B cell (primary cell): ENCODE measurements at regions of chr4 and their contacts with region 1.

Region 1: DNA sequence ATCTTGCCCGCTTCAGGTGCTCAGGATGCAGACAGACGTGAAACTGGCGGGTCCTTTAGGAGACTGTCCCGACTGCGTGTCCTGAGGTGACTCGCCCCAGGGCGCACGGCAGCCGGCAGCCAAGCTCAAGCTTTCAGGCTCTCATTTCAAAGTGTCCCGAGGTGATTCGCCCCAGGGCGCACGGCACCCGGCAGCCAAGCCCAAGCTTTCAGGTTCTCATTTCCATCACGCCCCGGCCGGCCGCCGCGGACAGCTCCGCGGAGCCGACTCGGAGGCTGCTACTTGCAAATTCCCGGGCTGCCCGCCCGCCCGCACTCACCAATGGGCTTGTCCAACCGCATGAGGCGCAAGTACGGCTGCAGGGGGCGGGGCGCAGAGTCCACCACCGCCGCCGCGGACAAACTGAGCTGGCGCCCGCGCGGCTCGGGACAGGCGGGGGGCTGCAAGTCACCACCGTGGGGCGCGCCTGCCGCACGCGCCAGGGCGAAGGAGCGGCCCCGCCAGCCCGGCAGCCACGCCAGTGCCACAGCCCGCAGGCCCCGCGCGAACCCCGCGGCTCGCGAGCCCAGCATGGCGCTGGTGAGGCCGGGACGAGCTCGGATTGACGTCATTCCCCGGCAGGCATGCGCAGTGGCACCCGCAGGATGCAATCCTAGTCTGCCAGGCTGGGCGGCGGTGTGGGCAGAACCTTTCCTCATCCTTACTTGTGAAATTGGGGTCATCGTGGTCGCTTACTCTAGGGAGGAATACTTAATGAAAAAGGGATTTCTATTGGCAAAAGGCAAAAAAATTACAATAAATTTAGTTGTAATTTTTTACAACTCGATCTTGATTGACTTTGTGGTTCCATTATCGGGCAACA is at the start of gene COQ2:
- DNase-seq: peak; percentile 96
- ATAC-seq: peak; percentile 85
- H3K4me3 ChIP-seq: peak within 1 kb of the TSS; percentile 60 to 98 (median 77)
- H3K4me3 Mint-ChIP-seq: peak within 1 kb of the TSS; percentile 99
- H3K27ac ChIP-seq: peak within 1 kb of the TSS; percentile 76 to 95
- H3K27ac Mint-ChIP-seq: peak within 1 kb of the TSS; percentile 99
- H3K4me1 ChIP-seq: peaks cover 18 to 19% of the 10 kb centered on the region in 2 donors
- H3K4me1 Mint-ChIP-seq: peaks cover 38% of the 10 kb centered on the region
- H3K27me3 ChIP-seq: no peaks in the 10 kb centered on the region
- H3K27me3 Mint-ChIP-seq: no peaks in the 10 kb centered on the region
- CTCF ChIP-seq: peak; percentile 34
- total RNA-seq, gene COQ2: 27.9 and 29.4 TPM in 2 replicates

Region 2: GRCh38 chr4:82462415-82462831 is 822.0 kb before region 1 on chr4:
- CTCF ChIA-PET with region 1: no interaction called
- POLR2A ChIA-PET with region 1: no interaction called
- intact Hi-C with region 1: loop called (anchors 2 kb)
- DNase-seq: peak; percentile 86
- ATAC-seq: peak; percentile 98
- H3K4me3 ChIP-seq: no peak overlapping the region
- H3K4me3 Mint-ChIP-seq: no peak overlapping the region
- H3K27ac ChIP-seq: no peak overlapping the region
- H3K27ac Mint-ChIP-seq: no peak overlapping the region
- H3K4me1 ChIP-seq: peaks cover 5 to 8% of the 10 kb centered on the region in 2 donors
- H3K4me1 Mint-ChIP-seq: peaks cover 25% of the 10 kb centered on the region
- H3K27me3 ChIP-seq: no peaks in the 10 kb centered on the region
- H3K27me3 Mint-ChIP-seq: no peaks in the 10 kb centered on the region
- CTCF ChIP-seq: peak; percentile 87

Region 3: DNA sequence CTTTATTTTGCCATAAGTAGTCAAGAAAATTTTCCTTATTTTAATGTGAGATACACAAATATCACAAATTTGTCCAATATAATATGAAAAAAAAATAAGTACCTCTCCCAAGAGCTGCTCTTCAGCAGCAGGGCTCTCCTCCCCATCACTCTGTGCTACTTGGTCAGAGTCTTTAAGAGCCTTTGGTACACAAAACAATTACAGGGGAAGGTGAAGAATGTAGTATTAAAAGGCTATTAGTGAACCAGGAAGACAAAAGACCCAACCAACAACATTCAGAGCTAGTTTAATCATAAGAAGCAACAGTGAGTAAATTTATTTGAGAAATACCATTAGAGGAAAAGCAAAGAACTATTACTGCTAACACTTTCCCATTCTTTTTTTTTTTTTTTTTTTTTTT is 422.9 kb before region 1 on chr4:
- CTCF ChIA-PET with region 1: no interaction called
- POLR2A ChIA-PET with region 1: no interaction called
- intact Hi-C with region 1: no loop called
- DNase-seq: no peak
- ATAC-seq: no peak
- H3K4me3 ChIP-seq: no peak overlapping the region
- H3K4me3 Mint-ChIP-seq: no peak overlapping the region
- H3K27ac ChIP-seq: no peak overlapping the region
- H3K27ac Mint-ChIP-seq: no peak overlapping the region
- H3K4me1 ChIP-seq: no peaks in the 10 kb centered on the region
- H3K4me1 Mint-ChIP-seq: no peaks in the 10 kb centered on the region
- H3K27me3 ChIP-seq: no peaks in the 10 kb centered on the region
- H3K27me3 Mint-ChIP-seq: no peaks in the 10 kb centered on the region
- CTCF ChIP-seq: no peak

Region 4: GRCh38 chr4:83034630-83035494 is 249.6 kb before region 1 on chr4 and contains the start of gene COPS4:
- CTCF ChIA-PET with region 1: interaction called, 9 read pairs
- POLR2A ChIA-PET with region 1: interaction called, 4 read pairs
- intact Hi-C with region 1: loop called (anchors 1 kb)
- DNase-seq: peak; percentile 99
- ATAC-seq: peak; percentile 95
- H3K4me3 ChIP-seq: peak within 1 kb of the TSS; percentile 80 to 94 (median 91)
- H3K4me3 Mint-ChIP-seq: peak within 1 kb of the TSS; percentile 98
- H3K27ac ChIP-seq: peak within 1 kb of the TSS; percentile 84 to 86
- H3K27ac Mint-ChIP-seq: peak within 1 kb of the TSS; percentile 98
- H3K4me1 ChIP-seq: peaks cover 10 to 16% of the 10 kb centered on the region in 2 donors
- H3K4me1 Mint-ChIP-seq: peaks cover 34% of the 10 kb centered on the region
- H3K27me3 ChIP-seq: no peaks in the 10 kb centered on the region
- H3K27me3 Mint-ChIP-seq: no peaks in the 10 kb centered on the region
- CTCF ChIP-seq: peak; percentile 34
- total RNA-seq, gene COPS4: 24.5 and 32.8 TPM in 2 replicates

Region 5: DNA sequence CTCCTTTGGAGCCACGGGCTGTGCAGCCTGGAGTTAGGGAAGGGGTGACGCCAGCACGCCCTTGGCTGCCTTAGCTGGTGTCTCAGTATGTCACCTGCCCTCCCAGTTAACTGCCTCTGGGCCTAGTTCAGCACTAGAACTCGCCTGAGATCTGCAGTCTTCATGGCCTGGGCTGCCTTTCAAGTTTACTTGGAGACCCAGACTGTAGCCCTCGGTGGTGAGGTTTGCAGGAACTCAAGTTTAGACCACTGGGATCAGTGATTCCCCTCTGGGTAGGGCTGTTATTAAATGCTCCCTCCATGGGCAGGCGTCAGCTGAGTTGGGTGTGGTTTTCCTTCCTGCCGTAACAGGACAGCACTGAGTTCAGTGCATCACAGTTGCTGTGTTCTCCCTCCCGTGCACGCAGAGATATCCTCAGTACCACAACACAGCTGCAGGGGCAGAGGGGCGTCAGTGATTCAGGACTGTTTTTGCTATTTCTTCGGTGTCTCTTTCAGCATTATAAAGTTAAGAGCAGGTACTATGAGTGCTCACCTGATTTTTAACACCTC is 200.4 kb before region 1 on chr4:
- CTCF ChIA-PET with region 1: interaction called, 21 read pairs
- POLR2A ChIA-PET with region 1: no interaction called
- intact Hi-C with region 1: no loop called
- DNase-seq: peak; percentile 83
- ATAC-seq: peak; percentile 98
- H3K4me3 ChIP-seq: peak overlapping the region in 2 of 5 experiments; percentile 15 to 32
- H3K4me3 Mint-ChIP-seq: peak overlapping the region; percentile 50
- H3K27ac ChIP-seq: peak overlapping the region; percentile 77 to 93
- H3K27ac Mint-ChIP-seq: peak overlapping the region; percentile 92
- H3K4me1 ChIP-seq: peaks cover 26 to 37% of the 10 kb centered on the region in 2 donors
- H3K4me1 Mint-ChIP-seq: peaks cover 44% of the 10 kb centered on the region
- H3K27me3 ChIP-seq: no peaks in the 10 kb centered on the region
- H3K27me3 Mint-ChIP-seq: no peaks in the 10 kb centered on the region
- CTCF ChIP-seq: peak; percentile 58

Region 6: GRCh38 chr4:83150653-83151330 is 133.6 kb before region 1 on chr4:
- CTCF ChIA-PET with region 1: no interaction called
- POLR2A ChIA-PET with region 1: no interaction called
- intact Hi-C with region 1: no loop called
- DNase-seq: no peak
- ATAC-seq: no peak
- H3K4me3 ChIP-seq: no peak overlapping the region
- H3K4me3 Mint-ChIP-seq: no peak overlapping the region
- H3K27ac ChIP-seq: no peak overlapping the region
- H3K27ac Mint-ChIP-seq: no peak overlapping the region
- H3K4me1 ChIP-seq: peaks cover 31 to 33% of the 10 kb centered on the region in 2 donors
- H3K4me1 Mint-ChIP-seq: peaks cover 42% of the 10 kb centered on the region
- H3K27me3 ChIP-seq: no peaks in the 10 kb centered on the region
- H3K27me3 Mint-ChIP-seq: no peaks in the 10 kb centered on the region
- CTCF ChIP-seq: no peak

Region 7: DNA sequence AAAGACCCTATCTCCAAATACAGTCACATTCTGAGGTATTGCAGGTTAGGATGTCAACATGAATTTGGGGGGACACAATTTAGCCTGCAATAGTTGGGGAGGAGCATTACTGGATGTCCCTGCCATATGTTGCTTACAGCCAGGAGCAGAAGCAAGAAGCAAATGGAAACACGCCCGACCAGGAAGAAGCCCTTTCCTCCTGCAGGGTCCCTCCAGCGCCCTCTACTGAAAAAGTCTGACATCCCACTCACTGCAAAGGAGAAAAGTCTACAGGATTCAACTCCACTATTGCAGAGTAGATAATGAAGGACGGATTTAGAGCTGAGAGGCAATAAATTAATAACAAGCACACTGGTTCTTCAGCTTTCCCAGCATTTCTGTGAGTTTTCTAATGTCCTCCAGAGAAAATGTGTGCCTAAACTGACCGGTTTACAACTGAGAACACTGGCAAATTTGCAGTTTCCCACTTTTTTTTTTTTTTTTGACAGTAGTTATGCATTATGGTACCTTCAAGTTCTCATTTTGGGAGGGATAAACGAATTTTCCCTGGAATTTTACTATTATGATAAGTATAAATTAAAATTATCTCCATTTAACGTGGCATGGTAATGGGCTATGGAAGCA is 31.5 kb before region 1 on chr4:
- CTCF ChIA-PET with region 1: interaction called, 17 read pairs
- POLR2A ChIA-PET with region 1: interaction called, 6 read pairs
- intact Hi-C with region 1: no loop called
- DNase-seq: peak; percentile 82
- ATAC-seq: peak; percentile 69
- H3K4me3 ChIP-seq: no peak overlapping the region
- H3K4me3 Mint-ChIP-seq: no peak overlapping the region
- H3K27ac ChIP-seq: peak overlapping the region in 1 of 2 donors; percentile 3
- H3K27ac Mint-ChIP-seq: peak overlapping the region; percentile 65
- H3K4me1 ChIP-seq: peaks cover 46 to 49% of the 10 kb centered on the region in 2 donors
- H3K4me1 Mint-ChIP-seq: peaks cover 53% of the 10 kb centered on the region
- H3K27me3 ChIP-seq: no peaks in the 10 kb centered on the region
- H3K27me3 Mint-ChIP-seq: no peaks in the 10 kb centered on the region
- CTCF ChIP-seq: peak; percentile 85

Region 8: GRCh38 chr4:83334425-83335241 is 50.2 kb after region 1 on chr4 and contains the start of gene HPSE:
- CTCF ChIA-PET with region 1: interaction called, 3 read pairs
- POLR2A ChIA-PET with region 1: interaction called, 3 read pairs
- intact Hi-C with region 1: loop called (anchors 5 kb)
- DNase-seq: peak; percentile 76
- ATAC-seq: peak; percentile 92
- H3K4me3 ChIP-seq: peak within 1 kb of the TSS; percentile 48 to 85 (median 69)
- H3K4me3 Mint-ChIP-seq: peak within 1 kb of the TSS; percentile 86
- H3K27ac ChIP-seq: no peak within 1 kb of the TSS
- H3K27ac Mint-ChIP-seq: peak within 1 kb of the TSS; percentile 57
- H3K4me1 ChIP-seq: peaks cover 12 to 19% of the 10 kb centered on the region in 2 donors
- H3K4me1 Mint-ChIP-seq: peaks cover 20% of the 10 kb centered on the region
- H3K27me3 ChIP-seq: peaks cover 0 to 6% (median 0%) of the 10 kb centered on the region in 4 experiments
- H3K27me3 Mint-ChIP-seq: peaks cover 7% of the 10 kb centered on the region
- CTCF ChIP-seq: no peak
- total RNA-seq, gene HPSE: 1.3 and 2.6 TPM in 2 replicates

Region 9: DNA sequence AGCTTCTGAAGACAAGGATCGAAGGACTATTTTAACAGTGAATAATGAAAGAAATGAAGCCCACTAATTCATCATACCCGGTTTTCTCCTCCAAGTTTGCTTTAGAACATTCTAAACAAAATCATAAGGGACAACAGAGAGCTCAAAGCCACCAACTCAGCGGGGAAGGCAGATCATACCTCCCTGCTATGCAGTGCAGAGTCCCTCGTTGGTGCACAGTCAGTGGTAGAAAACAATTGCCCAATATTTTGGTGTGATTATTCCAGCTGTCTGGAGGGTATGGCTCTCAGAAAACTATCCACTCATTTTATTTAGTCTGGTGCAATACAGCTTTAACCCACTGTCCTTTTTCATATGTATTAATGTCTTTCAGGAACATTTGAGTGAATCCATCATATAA is 109.5 kb after region 1 on chr4:
- CTCF ChIA-PET with region 1: no interaction called
- POLR2A ChIA-PET with region 1: no interaction called
- intact Hi-C with region 1: no loop called
- DNase-seq: no peak
- ATAC-seq: no peak
- H3K4me3 ChIP-seq: no peak overlapping the region
- H3K4me3 Mint-ChIP-seq: no peak overlapping the region
- H3K27ac ChIP-seq: no peak overlapping the region
- H3K27ac Mint-ChIP-seq: no peak overlapping the region
- H3K4me1 ChIP-seq: peaks cover 0 to 5% of the 10 kb centered on the region in 2 donors
- H3K4me1 Mint-ChIP-seq: peaks cover 7% of the 10 kb centered on the region
- H3K27me3 ChIP-seq: no peaks in the 10 kb centered on the region
- H3K27me3 Mint-ChIP-seq: no peaks in the 10 kb centered on the region
- CTCF ChIP-seq: no peak

Region 10: GRCh38 chr4:83757121-83757621 is 472.7 kb after region 1 on chr4:
- CTCF ChIA-PET with region 1: no interaction called
- POLR2A ChIA-PET with region 1: no interaction called
- intact Hi-C with region 1: no loop called
- DNase-seq: no peak
- ATAC-seq: no peak
- H3K4me3 ChIP-seq: no peak overlapping the region
- H3K4me3 Mint-ChIP-seq: no peak overlapping the region
- H3K27ac ChIP-seq: no peak overlapping the region
- H3K27ac Mint-ChIP-seq: no peak overlapping the region
- H3K4me1 ChIP-seq: no peaks in the 10 kb centered on the region
- H3K4me1 Mint-ChIP-seq: no peaks in the 10 kb centered on the region
- H3K27me3 ChIP-seq: no peaks in the 10 kb centered on the region
- H3K27me3 Mint-ChIP-seq: peaks cover 7% of the 10 kb centered on the region
- CTCF ChIP-seq: no peak